CD4-positive, alpha-beta T cell (primary cell): ENCODE measurements at regions of chr3 and their contacts with region 1.

Region 1: GRCh38 chr3:46089237-46090011 is 62.1 kb upstream of the XCR1 start:
- DNase-seq: peak in 3 of 14 experiments; percentile 29 to 82 (median 73)
- ATAC-seq: no peak
- H3K4me3 ChIP-seq: no peak overlapping the region
- H3K4me3 Mint-ChIP-seq: no peak overlapping the region
- H3K27ac ChIP-seq: peak overlapping the region in 1 of 2 donors; percentile 56
- H3K27ac Mint-ChIP-seq: no peak overlapping the region
- H3K4me1 ChIP-seq: peaks cover 9% of the 10 kb centered on the region
- H3K4me1 Mint-ChIP-seq: no peaks in the 10 kb centered on the region
- H3K27me3 ChIP-seq: no peaks in the 10 kb centered on the region
- H3K27me3 Mint-ChIP-seq: no peaks in the 10 kb centered on the region
- CTCF ChIP-seq: no peak

Region 2: DNA sequence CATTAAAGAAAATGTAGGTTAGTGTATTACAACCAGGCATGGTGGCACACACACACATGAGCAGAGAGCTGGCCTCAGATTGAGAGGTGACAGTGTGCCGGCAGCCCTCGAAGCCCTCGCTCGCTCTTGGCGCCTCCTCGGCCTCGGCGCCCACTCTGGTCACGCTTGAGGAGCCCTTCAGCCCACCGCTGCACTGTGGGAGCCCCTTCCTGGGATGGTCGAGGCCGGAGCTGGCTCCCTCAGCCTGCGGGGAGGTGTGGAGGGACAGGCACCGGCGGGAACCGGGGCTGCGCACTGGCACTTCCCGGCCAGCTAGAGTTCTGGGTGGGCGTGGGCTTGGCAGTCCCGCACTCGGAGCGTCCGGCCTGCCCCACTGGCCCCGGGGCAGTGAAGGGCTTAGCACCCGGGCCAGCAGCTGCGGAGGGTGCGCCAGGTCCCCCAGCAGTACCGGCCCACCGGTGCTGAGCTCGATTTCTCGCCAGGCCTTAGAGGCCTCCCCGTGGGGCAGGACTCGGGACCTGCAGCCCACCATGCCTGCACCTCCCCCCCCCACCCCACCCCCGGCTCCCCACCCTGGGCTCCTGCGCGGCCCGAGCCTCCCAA is 782.9 kb before region 1 on chr3:
- CTCF ChIA-PET with region 1: no interaction called
- POLR2A ChIA-PET with region 1: no interaction called
- intact Hi-C with region 1: no loop called
- DNase-seq: no peak
- ATAC-seq: no peak
- H3K4me3 ChIP-seq: no peak overlapping the region
- H3K4me3 Mint-ChIP-seq: no peak overlapping the region
- H3K27ac ChIP-seq: no peak overlapping the region
- H3K27ac Mint-ChIP-seq: no peak overlapping the region
- H3K4me1 ChIP-seq: no peaks in the 10 kb centered on the region
- H3K4me1 Mint-ChIP-seq: no peaks in the 10 kb centered on the region
- H3K27me3 ChIP-seq: peaks cover under 1 to 3% of the 10 kb centered on the region in 2 experiments
- H3K27me3 Mint-ChIP-seq: peaks cover 14% of the 10 kb centered on the region
- CTCF ChIP-seq: no peak

Region 3: DNA sequence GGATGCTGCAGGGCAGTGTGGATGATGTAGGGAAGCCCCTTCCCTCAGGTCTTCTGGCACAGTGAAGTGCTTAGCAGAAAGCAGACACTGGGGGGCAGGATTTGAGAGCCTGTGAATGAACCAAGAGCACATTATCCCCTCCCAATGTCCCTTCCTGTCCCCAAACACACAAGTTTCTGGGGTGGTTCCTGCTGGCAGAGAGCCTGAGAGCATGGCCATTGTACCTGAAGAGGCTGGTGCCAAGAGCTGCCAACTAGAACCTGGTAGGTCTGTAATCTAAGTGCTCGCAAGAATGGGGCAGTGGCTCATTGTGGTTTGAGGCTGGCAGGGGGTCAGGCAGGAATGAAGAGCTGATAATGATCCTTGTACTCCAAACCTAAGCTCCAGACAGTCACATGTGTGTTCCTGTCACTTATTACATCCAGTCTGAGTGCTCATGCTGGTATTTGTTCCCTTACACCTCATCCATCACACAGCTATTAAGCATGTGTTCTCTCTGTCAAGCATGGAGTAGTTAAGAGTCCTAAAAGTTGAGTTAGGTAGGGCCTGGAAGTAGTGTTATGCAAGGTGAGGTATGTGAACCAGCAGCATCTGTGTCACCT is 125.4 kb after region 1 on chr3:
- CTCF ChIA-PET with region 1: no interaction called
- POLR2A ChIA-PET with region 1: no interaction called
- intact Hi-C with region 1: loop called in 1 of 2 experiments (anchors 10 kb)
- DNase-seq: peak in 1 of 14 experiments; percentile 23
- ATAC-seq: no peak
- H3K4me3 ChIP-seq: no peak overlapping the region
- H3K4me3 Mint-ChIP-seq: no peak overlapping the region
- H3K27ac ChIP-seq: no peak overlapping the region
- H3K27ac Mint-ChIP-seq: no peak overlapping the region
- H3K4me1 ChIP-seq: peaks cover 32% of the 10 kb centered on the region
- H3K4me1 Mint-ChIP-seq: no peaks in the 10 kb centered on the region
- H3K27me3 ChIP-seq: no peaks in the 10 kb centered on the region
- H3K27me3 Mint-ChIP-seq: no peaks in the 10 kb centered on the region
- CTCF ChIP-seq: no peak